ENCODE measurements at regions of chr19 and their contacts with region 1.

Region 1: DNA sequence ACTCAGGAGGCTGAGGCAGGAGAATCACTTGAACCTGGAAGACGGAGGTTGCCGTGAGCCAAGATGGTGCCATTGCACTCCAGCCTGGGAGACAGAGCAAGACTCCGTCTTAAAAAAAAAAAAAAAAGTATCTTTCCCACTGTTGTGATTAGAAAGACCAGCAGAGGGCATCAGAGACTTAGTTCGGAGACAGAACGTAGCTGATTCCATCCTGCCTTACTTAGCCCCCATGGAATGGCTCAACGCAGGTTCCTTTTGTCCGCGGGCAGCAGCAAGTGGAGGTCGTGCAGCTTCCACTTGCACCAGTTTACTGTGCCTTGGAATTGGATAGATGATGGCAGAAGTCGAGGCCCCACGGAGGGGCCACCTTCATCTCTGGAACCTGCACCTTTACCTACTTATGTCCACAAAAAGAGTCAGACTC is 8.1 kb downstream of the TIMM29 start:
- DNase-seq: peak; percentile 81
- ATAC-seq: peak; percentile 96
- H3K4me3 ChIP-seq: no peak overlapping the region; the same call in 1 of the 2 replicates
- H3K27ac ChIP-seq: no peak overlapping the region
- H3K4me1 ChIP-seq: no peaks in the 10 kb centered on the region
- H3K27me3 ChIP-seq: no peaks in the 10 kb centered on the region
- CTCF ChIP-seq: peak; percentile 71
- POLR2A ChIP-seq: no peak
- RAD21 ChIP-seq: peak; percentile 82

Region 2: GRCh38 chr19:10499551-10500246 is 437.0 kb before region 1 on chr19:
- CTCF ChIA-PET with region 1: no interaction called
- POLR2A ChIA-PET with region 1: no interaction called
- dilution Hi-C with region 1: no loop called
- in situ Hi-C with region 1: no loop called
- intact Hi-C with region 1: no loop called
- DNase-seq: no peak
- ATAC-seq: no peak
- H3K4me3 ChIP-seq: no peak overlapping the region
- H3K27ac ChIP-seq: no peak overlapping the region
- H3K4me1 ChIP-seq: peaks cover 3% of the 10 kb centered on the region; the same call in 1 of the 2 replicates
- H3K27me3 ChIP-seq: no peaks in the 10 kb centered on the region
- CTCF ChIP-seq: no peak
- POLR2A ChIP-seq: no peak
- RAD21 ChIP-seq: no peak

Region 3: DNA sequence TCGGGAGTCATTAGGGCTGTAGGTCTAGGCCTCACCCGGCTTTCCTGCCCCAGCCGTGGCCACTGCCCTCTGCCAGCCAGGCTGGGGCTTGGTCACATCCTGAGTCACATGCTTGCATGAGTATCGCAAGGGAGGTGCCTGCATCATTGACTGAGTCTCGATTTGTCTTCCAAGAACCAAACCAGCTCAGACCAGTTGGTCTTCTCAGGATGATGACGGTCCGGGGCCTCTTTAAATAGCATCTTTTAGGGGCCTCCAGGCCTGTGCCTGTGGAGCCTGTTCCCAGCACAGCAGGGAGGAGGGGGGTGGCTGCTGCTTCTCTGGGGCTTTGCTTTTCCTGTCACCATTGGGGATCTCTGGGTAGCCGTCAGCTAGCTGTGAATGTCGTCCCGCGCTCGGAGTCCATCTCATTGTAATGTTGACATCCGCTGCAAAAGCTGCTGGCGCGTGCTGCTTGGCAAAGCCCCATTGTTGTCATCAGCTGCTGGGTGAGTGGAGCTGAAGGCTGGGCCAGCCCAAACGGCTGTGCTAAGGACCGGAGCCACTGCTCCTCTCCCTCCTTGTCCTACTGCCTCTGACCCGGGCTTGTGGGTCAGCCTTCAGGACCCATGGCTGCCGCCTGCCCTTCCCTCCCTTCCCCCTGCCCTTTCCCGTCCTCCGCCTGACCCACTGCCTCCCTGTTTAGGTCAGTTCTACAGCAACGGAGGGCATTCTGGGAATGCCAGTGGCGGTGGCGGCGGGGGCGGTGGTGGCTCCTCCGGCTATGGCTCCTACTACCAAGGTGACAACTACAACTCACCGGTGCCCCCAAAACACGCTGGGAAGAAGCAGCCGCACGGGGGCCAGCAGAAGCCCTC is 249.8 kb before region 1 on chr19:
- CTCF ChIA-PET with region 1: no interaction called
- POLR2A ChIA-PET with region 1: no interaction called
- dilution Hi-C with region 1: no loop called
- in situ Hi-C with region 1: no loop called
- intact Hi-C with region 1: no loop called
- DNase-seq: peak; percentile 28
- ATAC-seq: no peak
- H3K4me3 ChIP-seq: no peak overlapping the region
- H3K27ac ChIP-seq: no peak overlapping the region
- H3K4me1 ChIP-seq: no peaks in the 10 kb centered on the region
- H3K27me3 ChIP-seq: no peaks in the 10 kb centered on the region
- CTCF ChIP-seq: no peak
- POLR2A ChIP-seq: no peak
- RAD21 ChIP-seq: no peak

Region 4: DNA sequence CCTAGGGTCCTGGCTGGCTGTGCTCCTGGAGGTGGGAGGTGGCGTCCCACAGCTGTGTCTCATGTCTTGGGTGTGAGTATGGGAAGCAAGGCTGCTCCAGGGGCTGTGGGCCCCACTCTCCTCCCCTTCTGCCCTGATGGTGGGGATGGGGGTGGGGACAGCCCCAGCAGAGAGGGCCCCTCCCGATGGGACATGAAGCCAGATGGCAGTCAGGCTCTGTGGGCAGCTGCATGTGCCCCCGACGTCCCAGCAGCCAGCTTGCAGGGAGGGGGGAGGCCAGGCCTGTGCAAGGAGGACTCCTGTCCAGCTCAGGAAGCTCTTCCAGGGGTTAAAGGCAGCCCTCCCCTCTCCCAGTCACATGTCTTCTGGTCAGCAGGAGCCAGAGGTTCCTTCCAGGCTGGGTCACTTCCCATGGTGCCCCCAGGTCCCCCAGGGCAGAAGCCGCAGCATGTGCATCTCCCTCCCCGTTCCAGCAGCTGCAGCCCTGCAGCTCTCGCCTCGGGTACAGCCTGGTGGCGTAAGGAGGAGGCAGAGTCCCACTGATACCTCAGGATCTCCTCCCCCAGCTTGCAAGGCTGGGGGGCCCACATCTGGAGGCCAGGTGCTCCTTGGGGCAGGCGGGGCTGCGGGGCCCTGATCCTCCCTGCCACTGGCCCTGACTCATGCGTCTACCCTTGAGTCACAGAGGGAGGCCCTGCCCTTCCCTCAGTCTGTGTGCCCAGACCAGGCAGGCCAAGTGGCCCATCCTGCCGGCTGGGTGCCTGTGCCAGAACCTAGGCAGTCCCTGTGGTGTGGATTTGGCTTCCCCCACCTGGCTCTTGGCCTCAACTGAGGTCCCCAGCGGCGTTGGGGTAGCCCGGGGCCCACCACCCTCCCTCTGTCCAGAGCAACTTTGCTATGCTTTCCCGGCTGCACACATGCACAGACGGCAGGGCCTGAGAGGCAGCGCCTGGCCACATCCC is 21.3 kb before region 1 on chr19:
- CTCF ChIA-PET with region 1: interaction called, 10 read pairs
- POLR2A ChIA-PET with region 1: no interaction called
- dilution Hi-C with region 1: no loop called
- in situ Hi-C with region 1: no loop called
- intact Hi-C with region 1: no loop called
- DNase-seq: peak; percentile 86
- ATAC-seq: peak; percentile 88
- H3K4me3 ChIP-seq: no peak overlapping the region
- H3K27ac ChIP-seq: 0 out of 2 replicates have a peak overlapping the region, but pooled peaks have one; percentile 10
- H3K4me1 ChIP-seq: peaks cover 12% of the 10 kb centered on the region
- H3K27me3 ChIP-seq: no peaks in the 10 kb centered on the region
- CTCF ChIP-seq: peak; percentile 30; the same call in 1 of the 2 replicates
- POLR2A ChIP-seq: no peak
- RAD21 ChIP-seq: no peak; the same call in 1 of the 2 replicates

Region 5: GRCh38 chr19:10979951-10980381 is 43.3 kb after region 1 on chr19:
- CTCF ChIA-PET with region 1: no interaction called
- POLR2A ChIA-PET with region 1: no interaction called
- dilution Hi-C with region 1: no loop called
- in situ Hi-C with region 1: no loop called
- intact Hi-C with region 1: loop called (anchors 5 kb)
- DNase-seq: no peak
- ATAC-seq: no peak
- H3K4me3 ChIP-seq: no peak overlapping the region
- H3K27ac ChIP-seq: no peak overlapping the region
- H3K4me1 ChIP-seq: peaks cover 16% of the 10 kb centered on the region
- H3K27me3 ChIP-seq: no peaks in the 10 kb centered on the region
- CTCF ChIP-seq: no peak
- POLR2A ChIP-seq: no peak
- RAD21 ChIP-seq: no peak

Region 6: DNA sequence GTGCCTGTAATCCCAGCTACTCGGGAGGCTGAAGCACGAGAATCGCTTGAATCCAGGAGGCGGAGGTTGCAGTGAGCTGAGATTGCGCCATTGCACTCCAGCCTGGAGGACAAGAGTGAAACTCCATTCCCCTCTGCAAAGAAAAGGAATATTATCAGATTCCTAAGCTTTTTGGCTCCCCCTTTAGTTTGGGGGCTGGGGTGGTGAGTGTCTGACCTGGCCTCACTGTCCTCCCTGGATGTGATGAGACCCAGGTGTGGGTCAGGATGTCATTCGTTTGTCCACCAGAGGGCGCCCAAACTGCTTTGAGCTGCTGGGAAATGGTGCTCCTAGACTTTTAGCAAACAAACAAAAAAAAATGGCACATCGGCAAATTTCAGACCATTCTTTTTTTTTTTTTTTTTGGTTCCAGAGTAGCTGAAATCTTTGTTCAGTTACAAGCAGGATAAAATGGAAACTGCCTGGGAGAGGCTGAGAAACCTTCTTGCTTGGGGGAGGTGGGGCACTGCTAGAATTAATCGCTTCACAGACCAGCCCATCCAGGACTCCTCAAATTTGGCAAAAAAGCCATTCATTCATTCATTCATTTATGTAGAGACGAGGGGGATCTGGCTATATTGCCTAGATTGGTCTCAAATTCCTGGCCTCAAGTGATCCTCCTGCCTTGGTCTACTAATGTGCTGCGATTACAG is 189.5 kb after region 1 on chr19:
- CTCF ChIA-PET with region 1: interaction called, 3 read pairs
- POLR2A ChIA-PET with region 1: no interaction called
- dilution Hi-C with region 1: no loop called
- in situ Hi-C with region 1: no loop called
- intact Hi-C with region 1: loop called (anchors 1 kb)
- DNase-seq: peak; percentile 64
- ATAC-seq: peak; percentile 40; the same call in 1 of the 2 replicates
- H3K4me3 ChIP-seq: no peak overlapping the region
- H3K27ac ChIP-seq: no peak overlapping the region
- H3K4me1 ChIP-seq: peaks cover 2% of the 10 kb centered on the region; the same call in 1 of the 2 replicates
- H3K27me3 ChIP-seq: no peaks in the 10 kb centered on the region
- CTCF ChIP-seq: peak; percentile 69
- POLR2A ChIP-seq: no peak
- RAD21 ChIP-seq: peak; percentile 63

Region 7: GRCh38 chr19:11203194-11204075 is 266.8 kb after region 1 on chr19:
- CTCF ChIA-PET with region 1: interaction called, 4 read pairs
- POLR2A ChIA-PET with region 1: no interaction called
- dilution Hi-C with region 1: no loop called
- in situ Hi-C with region 1: loop called (anchors 5 kb)
- intact Hi-C with region 1: no loop called
- DNase-seq: peak; percentile 71
- ATAC-seq: peak; percentile 80
- H3K4me3 ChIP-seq: no peak overlapping the region
- H3K27ac ChIP-seq: peak overlapping the region; percentile 89
- H3K4me1 ChIP-seq: peaks cover 13% of the 10 kb centered on the region
- H3K27me3 ChIP-seq: no peaks in the 10 kb centered on the region
- CTCF ChIP-seq: peak; percentile 84
- POLR2A ChIP-seq: no peak
- RAD21 ChIP-seq: peak; percentile 86

Region 8: GRCh38 chr19:11673608-11674041 is 737.0 kb after region 1 on chr19:
- CTCF ChIA-PET with region 1: no interaction called
- POLR2A ChIA-PET with region 1: no interaction called
- dilution Hi-C with region 1: no loop called
- in situ Hi-C with region 1: no loop called
- intact Hi-C with region 1: no loop called
- DNase-seq: peak; percentile 55
- ATAC-seq: peak; percentile 98
- H3K4me3 ChIP-seq: peak overlapping the region; percentile 63
- H3K27ac ChIP-seq: no peak overlapping the region
- H3K4me1 ChIP-seq: no peaks in the 10 kb centered on the region
- H3K27me3 ChIP-seq: no peaks in the 10 kb centered on the region
- CTCF ChIP-seq: peak; percentile 68
- POLR2A ChIP-seq: no peak
- RAD21 ChIP-seq: peak; percentile 58